Tibial artery (tissue), 4 donors: ENCODE measurements at regions of chr17 and their contacts with region 1.

Region 1: GRCh38 chr17:8629371-8630225 is 927 bp downstream of the MYH10 start:
- DNase-seq: peak; percentile 49 to 74
- H3K4me3 ChIP-seq: peak overlapping the region; percentile 91 to 97
- H3K27ac ChIP-seq: peak overlapping the region; percentile 97 to 98
- H3K4me1 ChIP-seq: peaks cover 0 to 44% (median 14%) of the 10 kb centered on the region in 4 donors
- H3K27me3 ChIP-seq: no peaks in the 10 kb centered on the region
- CTCF ChIP-seq: no peak

Region 2: GRCh38 chr17:8572764-8573163 is 56.8 kb before region 1 on chr17:
- intact Hi-C with region 1: loop called (anchors 10 kb)
- DNase-seq: no peak
- H3K4me3 ChIP-seq: no peak overlapping the region
- H3K27ac ChIP-seq: peak overlapping the region; percentile 46 to 71
- H3K4me1 ChIP-seq: peaks cover 0 to 62% (median 15%) of the 10 kb centered on the region in 4 donors
- H3K27me3 ChIP-seq: no peaks in the 10 kb centered on the region
- CTCF ChIP-seq: peak; percentile 19 to 25

Region 3: DNA sequence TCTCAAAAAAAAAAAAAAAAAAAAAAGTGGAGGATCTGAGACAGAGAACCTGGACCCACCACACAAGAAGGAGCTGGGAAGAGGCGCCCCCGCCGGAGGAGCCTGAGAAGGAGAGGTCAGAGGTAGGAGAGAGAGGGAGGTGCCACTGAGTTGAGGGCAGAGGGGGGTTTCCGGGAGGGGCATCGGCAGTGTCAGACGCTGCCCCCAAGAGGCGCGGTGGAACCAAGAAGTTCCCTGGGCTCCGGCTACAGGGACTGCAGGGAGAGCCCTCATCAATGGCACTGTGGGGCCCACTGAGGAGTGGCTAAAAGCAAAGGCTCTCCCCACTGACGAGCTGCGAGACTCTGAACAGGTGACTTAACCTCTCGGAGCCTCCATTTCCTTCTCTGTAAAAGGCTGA is 110.9 kb after region 1 on chr17:
- intact Hi-C with region 1: loop called (anchors 5 kb)
- DNase-seq: peak in 1 of 2 donors; percentile 43
- H3K4me3 ChIP-seq: no peak overlapping the region
- H3K27ac ChIP-seq: no peak overlapping the region
- H3K4me1 ChIP-seq: peaks cover 0 to 15% (median 3%) of the 10 kb centered on the region in 4 donors
- H3K27me3 ChIP-seq: no peaks in the 10 kb centered on the region
- CTCF ChIP-seq: no peak